ENCODE measurements at regions of chr21 and their contacts with region 1.

Region 1: DNA sequence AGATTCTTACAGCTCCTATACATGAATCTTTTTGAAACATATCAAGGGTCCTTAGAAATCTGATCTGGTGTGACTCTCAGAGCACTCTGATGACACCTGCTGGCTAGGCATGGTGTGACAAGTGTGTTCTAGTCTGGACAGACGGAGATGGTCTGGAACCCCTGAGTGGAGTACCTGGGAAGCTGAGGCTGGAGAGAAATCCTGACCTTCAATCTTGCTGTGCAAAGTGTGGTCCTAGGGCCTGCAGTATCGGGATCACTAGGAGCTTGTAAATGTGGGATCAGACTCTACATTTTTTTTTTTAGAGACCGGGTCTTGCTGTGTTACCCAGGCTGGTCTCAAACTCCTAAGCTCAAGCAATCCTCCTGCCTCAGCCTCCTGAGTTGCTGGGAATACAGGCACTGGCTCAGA is 78.6 kb upstream of the SOD1 start:
- DNase-seq: peak; percentile 71
- H3K4me3 ChIP-seq: no peak overlapping the region
- H3K27ac ChIP-seq: no peak overlapping the region
- H3K4me1 ChIP-seq: no peaks in the 10 kb centered on the region
- H3K27me3 ChIP-seq: no peaks in the 10 kb centered on the region
- CTCF ChIP-seq: peak; percentile 81

Region 2: GRCh38 chr21:31098576-31099005 is 482.3 kb before region 1 on chr21:
- CTCF ChIA-PET with region 1: no interaction called
- POLR2A ChIA-PET with region 1: no interaction called
- intact Hi-C with region 1: loop called (anchors 2 kb)
- DNase-seq: peak; percentile 62
- H3K4me3 ChIP-seq: no peak overlapping the region
- H3K27ac ChIP-seq: no peak overlapping the region
- H3K4me1 ChIP-seq: no peaks in the 10 kb centered on the region
- H3K27me3 ChIP-seq: no peaks in the 10 kb centered on the region
- CTCF ChIP-seq: peak; percentile 92

Region 3: GRCh38 chr21:31198575-31198974 is 382.3 kb before region 1 on chr21:
- CTCF ChIA-PET with region 1: interaction called, 9 read pairs
- POLR2A ChIA-PET with region 1: no interaction called
- intact Hi-C with region 1: loop called (anchors 1 kb)
- DNase-seq: peak; percentile 69
- H3K4me3 ChIP-seq: no peak overlapping the region
- H3K27ac ChIP-seq: no peak overlapping the region
- H3K4me1 ChIP-seq: no peaks in the 10 kb centered on the region
- H3K27me3 ChIP-seq: no peaks in the 10 kb centered on the region
- CTCF ChIP-seq: peak; percentile 65

Region 4: GRCh38 chr21:31343680-31344480 is 237.0 kb before region 1 on chr21 and contains the start of gene TIAM1:
- CTCF ChIA-PET with region 1: no interaction called
- POLR2A ChIA-PET with region 1: no interaction called
- intact Hi-C with region 1: loop called (anchors 10 kb)
- DNase-seq: peak; percentile 31
- H3K4me3 ChIP-seq: peak within 1 kb of the TSS; percentile 16
- H3K27ac ChIP-seq: no peak within 1 kb of the TSS
- H3K4me1 ChIP-seq: no peaks in the 10 kb centered on the region
- H3K27me3 ChIP-seq: peaks cover 27% of the 10 kb centered on the region
- CTCF ChIP-seq: no peak
- total RNA-seq, gene TIAM1: 9.6 and 14.3 TPM in 2 replicates